Thyroid gland (tissue), 4 donors: ENCODE measurements at regions of chr7 and their contacts with region 1.

Region 1: DNA sequence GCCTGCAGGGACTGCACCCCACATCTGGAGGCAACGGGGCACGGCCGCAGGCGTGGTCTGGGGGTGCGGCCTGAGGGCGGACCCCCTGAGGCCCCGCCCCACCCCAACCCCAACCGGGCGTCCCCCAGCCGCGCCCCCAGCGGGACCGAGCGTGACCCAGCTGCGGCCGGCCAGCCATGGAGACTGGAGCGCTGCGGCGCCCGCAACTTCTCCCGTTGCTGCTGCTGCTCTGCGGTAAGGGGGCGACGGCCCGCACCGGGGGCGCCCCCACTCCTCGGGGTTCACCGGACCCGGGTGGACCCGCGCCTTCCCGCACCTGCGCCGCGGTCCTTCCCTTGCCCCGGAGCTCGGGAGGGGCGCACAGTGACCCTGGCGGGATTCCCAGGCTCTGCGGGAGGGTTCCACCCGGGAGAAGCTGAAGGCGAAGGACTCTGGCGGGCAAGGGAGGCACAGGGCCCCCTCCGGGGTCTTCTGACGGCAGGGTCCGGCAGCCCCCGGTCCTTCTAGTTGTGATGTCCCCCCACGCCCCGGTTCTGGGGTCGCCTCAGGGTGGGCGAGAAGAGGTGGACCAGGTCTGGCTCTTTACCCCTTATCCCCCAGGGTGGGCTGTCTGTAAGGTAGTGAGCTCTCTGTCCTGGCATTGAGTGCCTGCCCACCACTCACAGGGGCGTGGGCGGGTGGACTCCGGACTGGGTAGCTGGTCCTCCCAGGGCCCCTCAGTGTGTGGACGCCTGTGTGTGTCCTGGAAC is at the start of gene RAMP3:
- DNase-seq: no peak
- H3K4me3 ChIP-seq: peak within 1 kb of the TSS in 1 of 3 donors; percentile 41
- H3K27ac ChIP-seq: peak within 1 kb of the TSS in 2 of 3 donors; percentile 50 to 51
- H3K4me1 ChIP-seq: peaks cover 3 to 14% of the 10 kb centered on the region in 2 donors
- H3K27me3 ChIP-seq: no peaks in the 10 kb centered on the region
- CTCF ChIP-seq: no peak
- POLR2A ChIP-seq: no peak
- total RNA-seq, gene RAMP3: 40.1 to 145 (median 73.1) TPM

Region 2: GRCh38 chr7:44767912-44768627 is 389.8 kb before region 1 on chr7:
- intact Hi-C with region 1: no loop called
- DNase-seq: peak; percentile 62 to 74
- H3K4me3 ChIP-seq: no peak overlapping the region
- H3K27ac ChIP-seq: peak overlapping the region; percentile 21 to 54 (median 27)
- H3K4me1 ChIP-seq: peaks cover 12 to 35% of the 10 kb centered on the region in 2 donors
- H3K27me3 ChIP-seq: no peaks in the 10 kb centered on the region
- CTCF ChIP-seq: no peak
- POLR2A ChIP-seq: no peak

Region 3: DNA sequence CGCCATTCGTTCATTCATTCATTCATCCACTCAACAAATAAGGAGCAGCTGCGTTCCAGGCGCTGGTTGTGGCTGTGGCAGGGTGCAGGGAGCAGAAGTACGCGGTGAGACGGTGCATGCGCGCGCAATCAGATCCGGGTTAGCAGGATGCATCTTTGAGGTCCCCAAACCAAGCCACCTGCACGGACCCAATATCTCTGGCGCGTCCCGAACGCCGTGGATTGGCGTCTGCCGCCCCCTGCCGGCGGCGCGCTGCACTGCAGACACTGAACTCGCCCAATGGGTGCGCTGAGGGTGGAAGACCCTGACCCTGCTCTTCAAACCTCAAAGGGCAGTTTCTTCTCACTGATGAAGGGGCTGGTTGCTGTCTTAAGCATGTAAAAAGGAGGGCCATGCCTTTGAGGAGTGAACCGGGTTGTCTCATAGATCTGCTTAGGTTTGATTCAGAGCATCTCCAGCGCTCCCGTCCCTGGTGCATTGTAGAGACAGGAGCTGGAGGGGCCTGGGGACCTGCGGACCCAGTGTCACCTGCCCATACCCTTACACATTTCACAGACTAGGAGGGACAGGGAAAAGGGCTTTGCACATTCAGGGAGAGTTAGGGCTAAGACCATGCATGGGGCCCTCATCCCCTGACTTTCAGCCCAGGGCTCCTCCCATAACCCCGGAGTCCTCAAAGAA is 102.3 kb after region 1 on chr7:
- intact Hi-C with region 1: loop called (anchors 5 kb)
- DNase-seq: peak; percentile 36 to 52
- H3K4me3 ChIP-seq: no peak overlapping the region
- H3K27ac ChIP-seq: no peak overlapping the region
- H3K4me1 ChIP-seq: no peaks in the 10 kb centered on the region
- H3K27me3 ChIP-seq: no peaks in the 10 kb centered on the region
- CTCF ChIP-seq: peak; percentile 71 to 98 (median 89)
- POLR2A ChIP-seq: no peak

Region 4: DNA sequence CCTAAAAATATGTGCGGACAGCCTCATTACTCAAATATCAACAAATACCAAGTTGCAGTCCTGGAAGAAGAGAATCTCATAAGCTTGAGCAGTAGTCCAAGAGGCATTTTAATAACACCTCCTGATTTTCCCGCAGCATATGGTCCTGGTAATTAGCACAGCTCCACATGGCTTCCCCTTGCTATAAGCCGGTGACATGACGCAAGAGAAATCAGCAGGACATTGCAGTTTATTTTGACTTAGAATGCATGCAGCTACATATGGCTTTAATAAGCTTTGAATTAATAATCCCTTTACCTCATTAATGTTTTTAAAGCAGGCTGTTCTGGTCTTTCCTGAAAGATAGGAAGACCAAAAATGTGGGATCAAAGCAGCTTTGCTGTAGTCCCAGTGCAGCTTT is 137.4 kb after region 1 on chr7:
- intact Hi-C with region 1: no loop called
- DNase-seq: no peak
- H3K4me3 ChIP-seq: no peak overlapping the region
- H3K27ac ChIP-seq: no peak overlapping the region
- H3K4me1 ChIP-seq: no peaks in the 10 kb centered on the region
- H3K27me3 ChIP-seq: no peaks in the 10 kb centered on the region
- CTCF ChIP-seq: no peak
- POLR2A ChIP-seq: no peak

Region 5: GRCh38 chr7:45863715-45864114 is 705.9 kb after region 1 on chr7:
- intact Hi-C with region 1: loop called (anchors 10 kb)
- DNase-seq: no peak
- H3K4me3 ChIP-seq: no peak overlapping the region
- H3K27ac ChIP-seq: no peak overlapping the region
- H3K4me1 ChIP-seq: no peaks in the 10 kb centered on the region
- H3K27me3 ChIP-seq: no peaks in the 10 kb centered on the region
- CTCF ChIP-seq: no peak
- POLR2A ChIP-seq: no peak